CD4-positive, alpha-beta T cell (primary cell): ENCODE measurements at regions of chr1 and their contacts with region 1.

Region 1: DNA sequence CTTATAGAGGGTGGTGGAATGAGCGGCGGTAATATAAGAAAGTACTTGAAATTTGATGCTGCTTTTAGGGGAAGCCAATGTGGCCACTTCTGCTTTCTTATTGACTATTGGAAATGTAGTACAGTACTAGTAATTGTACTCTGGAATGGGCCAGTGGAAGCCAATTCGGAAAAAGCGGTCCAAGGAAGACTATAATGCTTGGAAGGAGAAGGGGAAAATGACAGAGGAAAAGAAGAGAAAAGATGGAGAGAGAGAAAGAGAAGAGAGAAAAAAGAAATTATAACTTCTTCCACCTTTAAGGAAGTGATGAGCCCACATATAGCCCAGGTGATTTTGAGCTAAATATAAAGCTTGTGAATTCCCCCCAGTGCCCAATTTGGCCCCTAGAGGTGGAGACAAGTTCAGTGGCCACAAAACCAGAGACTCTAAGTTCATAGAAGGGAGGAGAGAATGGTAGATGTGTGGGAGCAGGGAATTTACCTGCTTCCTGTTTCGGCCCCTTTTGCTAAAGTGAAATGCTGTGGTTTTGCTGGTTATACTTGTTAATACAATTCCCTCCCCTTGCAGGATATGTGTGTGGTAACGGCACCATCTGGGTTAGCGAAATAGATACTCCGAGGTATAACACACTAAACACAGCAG is 35.7 kb upstream of the DUSP10 start:
- DNase-seq: peak in 6 of 14 experiments; percentile 16 to 89 (median 52)
- ATAC-seq: peak; percentile 76
- H3K4me3 ChIP-seq: no peak overlapping the region
- H3K4me3 Mint-ChIP-seq: peak overlapping the region; percentile 47
- H3K27ac ChIP-seq: peak overlapping the region; percentile 43 to 59
- H3K27ac Mint-ChIP-seq: peak overlapping the region; percentile 88
- H3K4me1 ChIP-seq: peaks cover 54% of the 10 kb centered on the region
- H3K4me1 Mint-ChIP-seq: peaks cover 57% of the 10 kb centered on the region
- H3K27me3 ChIP-seq: no peaks in the 10 kb centered on the region
- H3K27me3 Mint-ChIP-seq: no peaks in the 10 kb centered on the region
- CTCF ChIP-seq: no peak

Region 2: DNA sequence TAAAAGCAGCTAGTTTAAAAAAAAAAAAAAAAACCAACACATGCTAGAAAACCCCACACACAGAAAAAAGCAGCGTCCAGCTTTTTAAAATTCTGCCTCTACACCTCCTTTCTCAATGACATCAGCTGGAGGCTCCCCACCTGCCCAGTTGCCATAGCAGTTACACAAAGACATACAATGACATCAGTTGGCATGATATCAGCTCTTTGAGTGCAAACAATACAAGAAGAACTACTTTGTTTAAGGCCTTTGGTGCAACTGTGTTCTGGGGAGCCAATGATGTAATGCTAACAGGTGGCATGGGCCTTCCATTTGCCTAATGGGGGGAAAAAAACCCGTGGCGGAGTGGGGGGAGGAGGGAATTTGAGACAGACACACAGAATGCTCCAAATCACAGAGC is 68.6 kb before region 1 on chr1:
- CTCF ChIA-PET with region 1: no interaction called
- POLR2A ChIA-PET with region 1: interaction called, 7 read pairs
- intact Hi-C with region 1: loop called in 1 of 2 experiments (anchors 2 kb)
- DNase-seq: peak in 13 of 14 experiments; percentile 7 to 92 (median 39)
- ATAC-seq: peak; percentile 42
- H3K4me3 ChIP-seq: no peak overlapping the region
- H3K4me3 Mint-ChIP-seq: no peak overlapping the region
- H3K27ac ChIP-seq: peak overlapping the region in 1 of 2 donors; percentile 75
- H3K27ac Mint-ChIP-seq: peak overlapping the region; percentile 78
- H3K4me1 ChIP-seq: peaks cover 46% of the 10 kb centered on the region
- H3K4me1 Mint-ChIP-seq: peaks cover 71% of the 10 kb centered on the region
- H3K27me3 ChIP-seq: no peaks in the 10 kb centered on the region
- H3K27me3 Mint-ChIP-seq: no peaks in the 10 kb centered on the region
- CTCF ChIP-seq: no peak

Region 3: GRCh38 chr1:221809031-221810029 is 31.8 kb after region 1 on chr1:
- CTCF ChIA-PET with region 1: interaction called, 3 read pairs
- POLR2A ChIA-PET with region 1: interaction called, 3 read pairs
- intact Hi-C with region 1: loop called in 1 of 2 experiments (anchors 5 kb)
- DNase-seq: peak in 2 of 14 experiments; percentile 13 to 28
- ATAC-seq: no peak
- H3K4me3 ChIP-seq: no peak overlapping the region
- H3K4me3 Mint-ChIP-seq: no peak overlapping the region
- H3K27ac ChIP-seq: no peak overlapping the region
- H3K27ac Mint-ChIP-seq: peak overlapping the region; percentile 7
- H3K4me1 ChIP-seq: peaks cover 9% of the 10 kb centered on the region
- H3K4me1 Mint-ChIP-seq: peaks cover 30% of the 10 kb centered on the region
- H3K27me3 ChIP-seq: no peaks in the 10 kb centered on the region
- H3K27me3 Mint-ChIP-seq: no peaks in the 10 kb centered on the region
- CTCF ChIP-seq: no peak